ENCODE measurements at regions of chr12 and their contacts with region 1.

Region 1: DNA sequence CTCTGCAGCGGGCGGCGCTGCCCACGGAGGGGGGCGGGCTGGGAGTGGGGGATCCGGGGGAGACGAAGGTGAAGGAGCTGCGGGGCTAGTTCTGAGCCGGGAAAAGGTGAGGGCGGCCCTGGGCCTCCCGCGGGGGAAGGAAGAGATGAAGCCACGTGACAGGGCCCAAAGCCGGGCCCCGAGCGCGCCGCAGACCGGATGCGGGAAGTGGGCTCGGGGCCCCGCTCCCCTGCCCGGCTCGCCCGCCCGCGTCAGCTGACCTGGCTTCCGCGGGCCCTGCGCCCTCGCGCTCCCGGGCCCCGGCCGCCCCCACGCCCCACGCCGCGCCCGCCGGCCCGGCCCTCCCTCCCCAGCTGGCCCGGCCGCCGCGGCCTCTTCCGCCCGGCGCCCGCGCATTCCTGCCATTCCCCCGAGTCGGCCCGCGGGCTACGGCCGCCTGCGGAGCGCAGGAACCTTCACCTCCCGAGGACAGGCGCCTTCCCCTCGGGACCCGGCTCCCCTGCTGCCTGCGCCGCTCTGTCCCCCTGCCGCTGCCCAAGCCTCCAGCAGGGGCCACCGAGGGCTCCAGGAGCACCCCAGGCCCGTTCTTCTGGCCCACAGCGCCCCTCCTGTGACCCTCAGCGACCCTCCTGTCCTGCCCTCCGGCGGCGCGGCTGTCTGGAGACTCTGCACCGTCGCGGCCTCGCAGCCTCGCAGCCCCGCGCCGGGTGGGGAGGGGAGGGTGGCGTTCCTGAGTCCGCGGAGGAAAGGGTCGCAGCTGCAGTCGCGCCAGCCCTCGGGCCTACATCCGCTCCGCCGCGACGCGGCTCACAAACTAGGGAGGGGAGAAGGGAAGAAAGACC is 20.4 kb downstream of the NINJ2 start:
- DNase-seq: peak; percentile 86
- ATAC-seq: peak; percentile 75
- H3K4me3 ChIP-seq: peak overlapping the region; percentile 56 to 80 (median 78)
- H3K4me3 Mint-ChIP-seq: peak overlapping the region; percentile 89
- H3K27ac ChIP-seq: peak overlapping the region; percentile 94 to 96
- H3K27ac Mint-ChIP-seq: peak overlapping the region; percentile 99
- H3K4me1 ChIP-seq: peaks cover 28 to 43% of the 10 kb centered on the region in 2 donors
- H3K4me1 Mint-ChIP-seq: peaks cover 51% of the 10 kb centered on the region
- H3K27me3 ChIP-seq: no peaks in the 10 kb centered on the region
- H3K27me3 Mint-ChIP-seq: no peaks in the 10 kb centered on the region
- CTCF ChIP-seq: peak; percentile 43

Region 2: DNA sequence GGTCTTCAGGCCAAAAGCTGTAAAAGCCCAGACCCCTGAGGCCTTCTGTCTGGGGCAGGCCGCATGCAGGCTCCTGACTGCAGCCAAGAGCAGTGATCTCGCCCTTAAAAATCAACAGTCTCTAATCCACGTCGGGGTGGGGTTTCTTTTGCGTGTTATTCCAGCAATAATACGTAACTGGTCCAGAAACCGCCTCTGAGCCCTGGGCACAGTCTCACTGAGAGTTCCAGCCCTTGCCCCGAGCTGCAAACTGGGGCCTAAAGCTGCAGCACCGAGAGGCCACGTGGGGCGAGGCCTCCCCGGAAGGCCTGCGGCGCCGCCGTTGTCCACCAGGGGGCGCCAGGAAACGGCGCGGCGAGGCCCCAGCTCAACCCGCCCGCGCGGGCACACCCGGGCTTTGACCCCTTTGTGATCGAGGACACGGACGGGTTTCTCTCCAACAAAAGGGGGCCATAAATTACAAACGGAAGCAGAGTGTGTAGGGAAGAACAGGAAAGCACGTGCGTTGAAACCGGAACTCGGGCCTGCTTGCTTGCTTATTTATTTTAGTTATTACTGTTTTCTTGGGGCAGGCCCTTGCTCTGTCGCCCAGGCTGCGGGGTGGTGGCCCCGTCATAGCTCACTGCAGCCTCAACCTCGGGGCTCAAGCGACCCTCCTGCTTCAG is 66.8 kb before region 1 on chr12:
- CTCF ChIA-PET with region 1: interaction called, 3 read pairs
- POLR2A ChIA-PET with region 1: no interaction called
- intact Hi-C with region 1: loop called (anchors 1 kb)
- DNase-seq: peak; percentile 88
- ATAC-seq: peak; percentile 99
- H3K4me3 ChIP-seq: peak overlapping the region in 4 of 5 experiments; percentile 20 to 34 (median 26)
- H3K4me3 Mint-ChIP-seq: peak overlapping the region; percentile 79
- H3K27ac ChIP-seq: no peak overlapping the region
- H3K27ac Mint-ChIP-seq: peak overlapping the region; percentile 65
- H3K4me1 ChIP-seq: peaks cover 8 to 12% of the 10 kb centered on the region in 2 donors
- H3K4me1 Mint-ChIP-seq: peaks cover 8% of the 10 kb centered on the region
- H3K27me3 ChIP-seq: no peaks in the 10 kb centered on the region
- H3K27me3 Mint-ChIP-seq: no peaks in the 10 kb centered on the region
- CTCF ChIP-seq: peak; percentile 97

Region 3: DNA sequence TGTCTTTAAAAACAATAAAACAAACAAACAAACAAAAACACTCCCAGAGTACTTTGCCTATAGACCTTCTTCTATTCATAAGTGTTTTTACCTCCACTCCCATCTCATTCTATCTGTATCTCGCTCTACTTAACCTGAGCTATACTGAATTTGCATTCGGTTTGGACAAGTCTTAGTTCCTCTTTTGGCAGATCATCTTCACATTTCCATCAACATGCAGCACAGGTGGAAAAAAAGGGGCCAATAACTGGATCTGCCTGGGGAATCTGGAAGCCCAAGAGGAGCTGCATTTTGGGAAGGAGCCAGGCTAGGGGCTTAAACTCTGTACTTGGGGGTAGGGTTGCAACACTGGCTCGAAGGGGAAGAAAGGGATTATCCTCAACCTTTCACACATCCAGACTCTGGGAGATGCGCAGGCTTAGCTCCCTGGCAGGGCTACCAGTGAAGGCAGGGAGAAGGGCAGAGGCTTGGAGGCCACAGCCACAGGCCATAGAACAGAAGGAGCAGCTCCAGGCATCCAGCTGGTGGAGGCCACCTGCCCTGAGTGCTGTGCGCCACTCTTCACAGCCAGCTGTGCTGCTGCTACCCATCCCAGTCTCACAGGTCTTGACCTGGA is 16.3 kb after region 1 on chr12:
- CTCF ChIA-PET with region 1: interaction called, 5 read pairs
- POLR2A ChIA-PET with region 1: no interaction called
- intact Hi-C with region 1: loop called (anchors 2 kb)
- DNase-seq: peak; percentile 73
- ATAC-seq: peak; percentile 90
- H3K4me3 ChIP-seq: no peak overlapping the region
- H3K4me3 Mint-ChIP-seq: peak overlapping the region; percentile 15
- H3K27ac ChIP-seq: no peak overlapping the region
- H3K27ac Mint-ChIP-seq: peak overlapping the region; percentile 48
- H3K4me1 ChIP-seq: peaks cover 25 to 27% of the 10 kb centered on the region in 2 donors
- H3K4me1 Mint-ChIP-seq: peaks cover 26% of the 10 kb centered on the region
- H3K27me3 ChIP-seq: no peaks in the 10 kb centered on the region
- H3K27me3 Mint-ChIP-seq: no peaks in the 10 kb centered on the region
- CTCF ChIP-seq: no peak

Region 4: GRCh38 chr12:685388-685787 is 42.5 kb after region 1 on chr12:
- CTCF ChIA-PET with region 1: interaction called, 9 read pairs
- POLR2A ChIA-PET with region 1: interaction called, 6 read pairs
- intact Hi-C with region 1: loop called (anchors 1 kb)
- DNase-seq: peak; percentile 93
- ATAC-seq: peak; percentile 78
- H3K4me3 ChIP-seq: peak overlapping the region in 4 of 5 experiments; percentile 5 to 31 (median 21)
- H3K4me3 Mint-ChIP-seq: peak overlapping the region; percentile 75
- H3K27ac ChIP-seq: peak overlapping the region; percentile 93 to 98
- H3K27ac Mint-ChIP-seq: peak overlapping the region; percentile 100
- H3K4me1 ChIP-seq: peaks cover 45 to 53% of the 10 kb centered on the region in 2 donors
- H3K4me1 Mint-ChIP-seq: peaks cover 49% of the 10 kb centered on the region
- H3K27me3 ChIP-seq: no peaks in the 10 kb centered on the region
- H3K27me3 Mint-ChIP-seq: no peaks in the 10 kb centered on the region
- CTCF ChIP-seq: no peak

Region 5: DNA sequence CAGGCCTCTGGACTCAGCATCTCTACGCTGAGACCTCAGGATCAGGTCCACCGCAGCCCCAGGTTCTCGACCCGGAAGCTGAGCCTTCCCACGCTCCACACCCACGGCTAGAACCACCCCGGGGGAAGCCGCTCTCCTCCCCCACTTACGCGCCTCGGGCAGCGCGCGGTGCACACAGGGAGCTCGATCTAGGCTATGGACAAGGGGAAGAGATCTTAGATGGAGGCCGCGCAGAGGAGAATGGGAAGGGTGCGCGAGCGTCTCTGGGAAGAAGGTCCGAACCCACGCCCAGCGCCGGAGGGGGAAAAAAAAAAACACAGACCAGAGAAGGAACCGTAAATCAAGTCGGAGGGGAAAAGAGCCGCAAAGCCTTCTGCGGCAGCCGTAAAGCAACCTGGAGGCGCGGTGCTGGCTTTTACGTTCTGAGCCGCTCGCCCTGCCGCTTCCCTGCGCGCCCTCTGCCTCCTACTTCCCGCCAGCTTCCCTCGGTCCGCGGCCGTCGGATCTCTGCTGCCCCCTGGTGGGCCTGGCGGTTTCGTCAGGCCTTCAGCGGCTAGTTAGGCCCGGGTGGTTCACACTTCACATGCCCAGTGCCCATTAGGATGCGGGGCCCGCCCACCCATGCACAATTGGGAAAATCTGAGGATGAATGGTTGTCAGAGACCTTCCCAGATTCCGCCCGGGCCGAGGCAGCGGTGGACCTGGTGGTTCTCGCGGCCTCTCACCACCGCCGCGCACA is 306.8 kb after region 1 on chr12 and contains the start of gene RAD52:
- CTCF ChIA-PET with region 1: no interaction called
- POLR2A ChIA-PET with region 1: no interaction called
- intact Hi-C with region 1: loop called (anchors 10 kb)
- DNase-seq: peak; percentile 99
- ATAC-seq: peak; percentile 86
- H3K4me3 ChIP-seq: peak within 1 kb of the TSS; percentile 67 to 91 (median 74)
- H3K4me3 Mint-ChIP-seq: peak within 1 kb of the TSS; percentile 88
- H3K27ac ChIP-seq: peak within 1 kb of the TSS; percentile 82 to 84
- H3K27ac Mint-ChIP-seq: peak within 1 kb of the TSS; percentile 90
- H3K4me1 ChIP-seq: peaks cover 0 to 13% of the 10 kb centered on the region in 2 donors
- H3K4me1 Mint-ChIP-seq: peaks cover 27% of the 10 kb centered on the region
- H3K27me3 ChIP-seq: no peaks in the 10 kb centered on the region
- H3K27me3 Mint-ChIP-seq: no peaks in the 10 kb centered on the region
- CTCF ChIP-seq: peak; percentile 99
- total RNA-seq, gene RAD52: 22.9 and 27.6 TPM in 2 replicates

Region 6: GRCh38 chr12:1059162-1059561 is 416.3 kb after region 1 on chr12:
- CTCF ChIA-PET with region 1: no interaction called
- POLR2A ChIA-PET with region 1: no interaction called
- intact Hi-C with region 1: no loop called
- DNase-seq: no peak
- ATAC-seq: no peak
- H3K4me3 ChIP-seq: no peak overlapping the region
- H3K4me3 Mint-ChIP-seq: no peak overlapping the region
- H3K27ac ChIP-seq: no peak overlapping the region
- H3K27ac Mint-ChIP-seq: no peak overlapping the region
- H3K4me1 ChIP-seq: no peaks in the 10 kb centered on the region
- H3K4me1 Mint-ChIP-seq: no peaks in the 10 kb centered on the region
- H3K27me3 ChIP-seq: no peaks in the 10 kb centered on the region
- H3K27me3 Mint-ChIP-seq: no peaks in the 10 kb centered on the region
- CTCF ChIP-seq: no peak

Measured in B cell (primary cell).